ENCODE measurements at regions of chrX and their contacts with region 1.

Region 1: GRCh38 chrX:3651276-3651675 is 62.2 kb downstream of the PRKX start:
- DNase-seq: no peak
- ATAC-seq: no peak
- H3K4me3 ChIP-seq: no peak overlapping the region
- H3K27ac ChIP-seq: no peak overlapping the region
- H3K4me1 ChIP-seq: no peaks in the 10 kb centered on the region
- H3K27me3 ChIP-seq: no peaks in the 10 kb centered on the region
- CTCF ChIP-seq: peak in 8 of 9 donors; percentile 30 to 64 (median 50)

Region 2: DNA sequence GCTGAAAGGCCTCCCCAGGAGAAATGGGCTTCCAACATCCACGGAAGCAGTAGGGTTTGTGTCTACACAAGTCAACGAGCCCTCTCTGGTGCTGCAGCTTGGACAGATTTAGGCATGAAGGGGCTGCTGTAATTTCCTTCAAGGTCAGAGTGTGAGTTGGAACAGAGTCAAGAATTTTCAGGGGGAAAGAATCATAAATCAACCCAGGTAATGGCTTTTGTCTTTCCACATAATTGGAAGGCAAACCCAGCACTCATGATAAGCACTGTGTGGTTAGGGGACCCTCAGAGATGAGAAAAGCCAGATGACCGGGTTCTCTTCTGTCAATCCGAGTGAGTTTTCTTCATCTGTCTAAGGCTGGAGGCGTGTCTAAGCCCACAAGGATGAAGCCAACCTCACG is 226.2 kb before region 1 on chrX:
- intact Hi-C with region 1: no loop called
- DNase-seq: no peak
- ATAC-seq: no peak
- H3K4me3 ChIP-seq: no peak overlapping the region
- H3K27ac ChIP-seq: no peak overlapping the region
- H3K4me1 ChIP-seq: no peaks in the 10 kb centered on the region
- H3K27me3 ChIP-seq: no peaks in the 10 kb centered on the region
- CTCF ChIP-seq: no peak

Region 3: DNA sequence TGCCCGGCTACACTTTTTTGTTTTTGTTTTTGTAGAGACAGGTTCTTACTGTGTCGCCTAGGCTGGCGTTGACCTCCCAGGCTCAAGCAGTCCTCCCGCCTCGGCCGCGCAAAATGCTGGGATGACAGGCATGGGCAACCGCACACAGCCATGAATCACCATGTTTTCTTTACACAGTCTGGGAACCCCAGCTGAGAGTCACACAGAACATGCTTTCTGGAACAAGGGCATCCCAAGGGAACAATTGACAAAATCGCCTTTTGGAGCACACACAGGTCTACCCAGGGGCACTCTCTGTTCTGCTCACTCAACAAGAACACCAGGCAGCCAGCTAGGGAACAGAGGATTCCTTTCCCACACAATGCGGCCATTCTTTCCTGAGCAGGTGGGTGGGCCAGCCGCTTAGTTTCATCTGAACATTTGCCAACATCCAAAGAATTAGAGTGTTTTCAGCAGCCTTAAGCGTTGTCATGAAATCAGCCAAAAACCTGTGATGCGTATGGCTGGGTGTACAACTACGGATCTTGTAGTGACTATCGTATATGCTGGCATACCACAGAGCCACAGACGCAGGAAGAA is 46.5 kb after region 1 on chrX:
- intact Hi-C with region 1: loop called in 1 of 10 experiments (anchors 10 kb)
- DNase-seq: peak; percentile 22 to 25
- ATAC-seq: peak in 7 of 8 donors; percentile 68 to 92 (median 86)
- H3K4me3 ChIP-seq: peak overlapping the region in 1 of 10 donors; percentile 9
- H3K27ac ChIP-seq: peak overlapping the region in 7 of 10 donors; percentile 7 to 46 (median 40)
- H3K4me1 ChIP-seq: peaks cover 0 to 65% (median 3%) of the 10 kb centered on the region in 9 donors
- H3K27me3 ChIP-seq: no peaks in the 10 kb centered on the region
- CTCF ChIP-seq: no peak

Region 4: DNA sequence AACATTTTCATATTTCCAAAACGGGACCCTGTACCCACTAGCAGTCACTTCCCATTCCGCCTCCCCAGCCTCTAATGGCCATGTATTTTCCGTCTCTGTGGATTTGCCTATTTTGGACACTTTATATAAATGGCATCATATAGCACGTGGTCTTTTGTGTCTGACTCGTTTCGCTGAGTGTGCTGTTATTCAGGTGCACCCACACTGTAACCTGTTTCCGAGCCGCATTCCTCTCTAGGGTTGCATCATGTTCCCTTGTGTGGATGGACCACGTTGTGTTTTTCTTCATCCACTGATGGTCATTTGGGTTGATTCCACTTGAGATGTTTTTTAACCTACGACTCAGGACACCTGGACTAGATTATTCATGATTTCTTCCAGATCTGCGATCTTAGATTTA is 147.3 kb after region 1 on chrX:
- intact Hi-C with region 1: loop called in 1 of 10 experiments (anchors 5 kb)
- DNase-seq: no peak
- ATAC-seq: no peak
- H3K4me3 ChIP-seq: no peak overlapping the region
- H3K27ac ChIP-seq: no peak overlapping the region
- H3K4me1 ChIP-seq: peaks cover 0 to 7% (median 0%) of the 10 kb centered on the region in 9 donors
- H3K27me3 ChIP-seq: no peaks in the 10 kb centered on the region
- CTCF ChIP-seq: no peak

Region 5: DNA sequence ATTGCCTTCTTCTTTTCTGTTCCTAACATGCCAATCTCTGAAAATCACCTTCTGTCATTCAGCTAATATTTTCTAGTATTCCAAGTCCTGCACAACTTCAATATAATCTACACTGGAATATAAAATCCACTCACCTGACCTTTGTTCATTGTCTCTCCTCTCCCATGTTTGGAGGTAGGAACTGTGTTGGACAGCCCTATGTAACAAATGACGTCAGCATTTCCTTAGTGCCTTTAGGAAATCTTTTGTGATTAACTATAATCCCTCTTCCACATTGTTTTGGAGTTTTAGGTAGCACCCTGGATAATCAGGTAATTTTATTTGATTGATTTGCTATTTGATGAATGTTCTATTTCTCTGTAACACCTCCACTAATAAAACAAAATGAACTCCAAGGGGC is 877.0 kb after region 1 on chrX:
- intact Hi-C with region 1: no loop called
- DNase-seq: no peak
- ATAC-seq: no peak
- H3K4me3 ChIP-seq: no peak overlapping the region
- H3K27ac ChIP-seq: no peak overlapping the region
- H3K4me1 ChIP-seq: no peaks in the 10 kb centered on the region
- H3K27me3 ChIP-seq: no peaks in the 10 kb centered on the region
- CTCF ChIP-seq: no peak

Measured in heart right ventricle (tissue), 16 donors.